ENCODE measurements at regions of chr10 and their contacts with region 1.

Region 1: GRCh38 chr10:43781480-43782361 is 133.0 kb upstream of the ZNF32 start:
- DNase-seq: peak; percentile 67
- ATAC-seq: peak; percentile 91
- H3K4me3 Mint-ChIP-seq: no peak overlapping the region
- H3K27ac Mint-ChIP-seq: no peak overlapping the region
- H3K4me1 Mint-ChIP-seq: peaks cover 23% of the 10 kb centered on the region
- H3K27me3 Mint-ChIP-seq: no peaks in the 10 kb centered on the region
- CTCF ChIP-seq: no peak

Region 2: GRCh38 chr10:43420369-43421200 is 361.1 kb before region 1 on chr10:
- CTCF ChIA-PET with region 1: no interaction called
- POLR2A ChIA-PET with region 1: no interaction called
- intact Hi-C with region 1: no loop called
- DNase-seq: peak; percentile 90
- ATAC-seq: peak; percentile 80
- H3K4me3 Mint-ChIP-seq: peak overlapping the region; percentile 77
- H3K27ac Mint-ChIP-seq: peak overlapping the region; percentile 96
- H3K4me1 Mint-ChIP-seq: peaks cover 31% of the 10 kb centered on the region
- H3K27me3 Mint-ChIP-seq: no peaks in the 10 kb centered on the region
- CTCF ChIP-seq: no peak

Region 3: GRCh38 chr10:43793704-43794103 is 12.0 kb after region 1 on chr10:
- CTCF ChIA-PET with region 1: no interaction called
- POLR2A ChIA-PET with region 1: no interaction called
- intact Hi-C with region 1: no loop called
- DNase-seq: no peak
- ATAC-seq: no peak
- H3K4me3 Mint-ChIP-seq: no peak overlapping the region
- H3K27ac Mint-ChIP-seq: no peak overlapping the region
- H3K4me1 Mint-ChIP-seq: no peaks in the 10 kb centered on the region
- H3K27me3 Mint-ChIP-seq: peaks cover 2% of the 10 kb centered on the region
- CTCF ChIP-seq: no peak

Region 4: GRCh38 chr10:43816351-43817321 is 34.9 kb after region 1 on chr10:
- CTCF ChIA-PET with region 1: no interaction called
- POLR2A ChIA-PET with region 1: no interaction called
- intact Hi-C with region 1: loop called (anchors 5 kb)
- DNase-seq: peak; percentile 93
- ATAC-seq: peak; percentile 95
- H3K4me3 Mint-ChIP-seq: peak overlapping the region; percentile 27
- H3K27ac Mint-ChIP-seq: peak overlapping the region; percentile 68
- H3K4me1 Mint-ChIP-seq: peaks cover 39% of the 10 kb centered on the region
- H3K27me3 Mint-ChIP-seq: no peaks in the 10 kb centered on the region
- CTCF ChIP-seq: no peak

Region 5: DNA sequence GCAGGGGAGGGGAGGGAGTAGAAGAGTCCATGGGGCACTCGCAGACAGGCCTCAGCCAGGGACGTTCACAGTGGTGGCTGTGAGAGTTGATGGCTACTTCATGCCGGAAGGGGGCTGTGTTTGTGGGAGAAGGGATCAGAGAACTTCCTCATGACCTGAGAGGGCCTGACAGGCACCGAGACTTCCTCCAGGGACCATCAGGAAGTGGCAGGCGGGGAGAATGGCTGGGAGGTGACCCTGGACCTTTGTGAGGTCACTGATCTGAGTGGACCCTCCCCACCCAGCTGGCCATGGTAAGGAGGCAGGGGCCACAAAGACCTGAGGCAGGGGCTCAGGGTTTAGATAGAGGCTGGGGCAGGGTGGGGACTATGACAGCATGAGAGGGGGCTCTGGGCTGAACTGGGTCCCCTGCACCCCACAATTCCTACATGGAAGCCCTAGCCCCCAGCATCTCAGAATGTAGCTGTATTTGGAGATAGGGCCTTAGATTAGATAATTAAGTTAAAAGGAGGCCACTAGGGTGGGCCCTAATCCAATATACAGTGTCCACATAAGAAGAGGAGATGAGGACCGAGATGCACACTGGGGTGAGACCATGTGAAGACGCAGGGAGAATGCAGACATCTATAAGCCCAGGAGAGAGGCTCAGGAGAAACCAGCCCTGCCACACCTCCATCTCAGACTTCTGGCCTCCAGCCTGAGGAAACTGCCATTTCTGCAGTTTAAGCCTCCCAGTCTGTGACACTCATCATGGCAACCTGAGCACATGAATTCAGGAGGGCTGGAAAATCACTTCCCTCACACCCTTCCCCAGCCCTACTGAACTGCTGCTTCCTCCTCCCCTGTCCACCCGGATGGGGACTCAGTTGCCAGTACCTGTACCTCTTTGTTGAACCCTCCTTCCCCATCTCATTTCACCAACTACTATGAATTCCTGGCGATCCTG is 140.9 kb after region 1 on chr10:
- CTCF ChIA-PET with region 1: no interaction called
- POLR2A ChIA-PET with region 1: no interaction called
- intact Hi-C with region 1: no loop called
- DNase-seq: no peak
- ATAC-seq: no peak
- H3K4me3 Mint-ChIP-seq: no peak overlapping the region
- H3K27ac Mint-ChIP-seq: no peak overlapping the region
- H3K4me1 Mint-ChIP-seq: no peaks in the 10 kb centered on the region
- H3K27me3 Mint-ChIP-seq: no peaks in the 10 kb centered on the region
- CTCF ChIP-seq: no peak